ENCODE measurements at regions of chr15 and their contacts with region 1.

Region 1: DNA sequence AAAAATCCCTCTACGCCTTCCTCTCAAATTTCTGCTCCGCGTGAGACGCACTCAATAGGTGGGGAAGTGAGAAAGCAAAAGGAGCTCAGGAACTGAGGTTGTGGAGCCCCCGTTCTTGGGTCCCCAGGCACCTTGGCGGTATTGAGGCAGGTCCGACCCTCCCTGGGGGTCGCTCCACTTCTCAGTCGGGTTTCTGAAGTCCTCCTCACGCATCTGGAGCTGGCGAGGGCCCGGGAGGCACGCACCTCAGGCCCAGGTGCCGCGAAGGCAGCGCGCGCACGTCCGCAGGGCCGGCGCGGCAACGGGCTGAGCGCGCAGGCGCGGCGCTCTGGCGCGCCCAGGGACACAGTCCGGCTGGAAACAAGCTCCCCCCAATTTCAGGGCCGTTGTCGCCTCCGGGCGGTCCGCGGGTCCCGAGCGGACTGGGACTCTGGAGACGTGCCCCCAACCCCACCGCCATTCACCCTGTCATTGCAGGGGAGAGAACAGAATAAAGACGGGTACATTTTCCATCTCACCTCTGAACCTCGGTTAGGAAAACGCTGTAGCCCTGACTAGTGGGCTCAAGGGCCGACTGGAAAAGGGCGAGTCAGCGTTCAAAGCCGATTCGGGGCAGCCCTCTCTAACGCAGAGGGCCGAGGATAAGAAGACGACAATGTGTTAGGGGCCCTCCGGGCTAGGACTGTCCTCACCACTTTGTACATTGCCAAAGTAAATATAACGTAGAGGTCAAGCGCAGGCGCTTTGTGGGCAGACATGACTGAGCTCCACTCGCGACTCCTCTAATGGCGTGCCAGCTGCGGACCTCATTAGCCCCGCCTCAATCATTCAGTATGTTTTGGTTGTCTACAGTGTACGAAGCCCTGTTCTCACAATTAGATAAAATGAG is at the start of gene ZNF770:
- DNase-seq: peak; percentile 90
- H3K4me3 Mint-ChIP-seq: peak within 1 kb of the TSS; percentile 97
- H3K27ac Mint-ChIP-seq: peak within 1 kb of the TSS; percentile 100
- H3K4me1 Mint-ChIP-seq: peaks cover 36% of the 10 kb centered on the region
- H3K27me3 Mint-ChIP-seq: no peaks in the 10 kb centered on the region
- total RNA-seq, gene ZNF770: 36.6 to 38.5 TPM

Region 2: DNA sequence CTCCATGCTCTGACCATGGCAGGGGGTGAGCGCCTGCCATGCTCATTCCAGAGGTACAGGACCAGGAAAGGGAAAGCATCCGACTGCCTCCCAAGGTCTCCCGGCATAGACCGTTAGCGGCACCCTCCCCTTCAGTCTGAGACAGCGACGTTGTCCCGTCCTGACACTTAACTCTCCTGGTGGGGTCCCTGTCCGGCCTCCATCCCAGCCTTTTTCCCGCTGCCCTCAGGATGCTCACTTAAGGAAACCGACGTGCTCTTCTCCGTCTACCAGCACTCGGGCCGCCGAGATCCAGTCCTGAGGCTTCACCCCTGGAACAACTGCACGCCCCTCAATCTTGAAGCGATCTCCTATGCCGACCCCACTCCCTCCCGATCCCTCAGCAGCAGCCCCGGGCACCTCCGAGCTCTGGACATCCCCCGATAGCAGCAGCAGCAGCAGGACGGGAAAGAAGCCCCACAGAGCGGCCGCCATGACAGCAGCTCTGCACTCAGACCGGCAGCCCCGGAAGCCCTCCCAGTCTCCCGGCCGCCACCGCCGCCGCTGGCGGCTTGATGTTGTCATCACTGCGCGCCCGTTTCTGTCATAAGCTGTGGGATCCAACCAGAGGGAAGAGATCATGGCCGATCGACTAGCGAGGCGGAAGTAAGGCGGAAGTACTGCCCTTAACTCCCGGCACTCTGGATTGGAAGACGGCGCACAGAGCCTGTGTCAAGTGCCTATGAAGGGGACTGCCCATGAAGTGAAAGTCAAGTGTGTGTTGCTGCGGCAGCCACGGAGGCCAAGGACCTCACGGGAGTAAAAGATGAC is 886.7 kb before region 1 on chr15 and contains the starts of genes EMC7 and PGBD4:
- CTCF ChIA-PET with region 1: no interaction called
- POLR2A ChIA-PET with region 1: no interaction called
- intact Hi-C with region 1: loop called (anchors 1 kb)
- DNase-seq: peak; percentile 100
- H3K4me3 Mint-ChIP-seq: peak within 1 kb of the TSS; percentile 99
- H3K27ac Mint-ChIP-seq: peak within 1 kb of the TSS; percentile 96
- H3K4me1 Mint-ChIP-seq: peaks cover 36% of the 10 kb centered on the region
- H3K27me3 Mint-ChIP-seq: no peaks in the 10 kb centered on the region
- total RNA-seq, gene EMC7: 62.7 to 68.4 TPM
- total RNA-seq, gene PGBD4: 2.0 to 2.3 TPM

Region 3: DNA sequence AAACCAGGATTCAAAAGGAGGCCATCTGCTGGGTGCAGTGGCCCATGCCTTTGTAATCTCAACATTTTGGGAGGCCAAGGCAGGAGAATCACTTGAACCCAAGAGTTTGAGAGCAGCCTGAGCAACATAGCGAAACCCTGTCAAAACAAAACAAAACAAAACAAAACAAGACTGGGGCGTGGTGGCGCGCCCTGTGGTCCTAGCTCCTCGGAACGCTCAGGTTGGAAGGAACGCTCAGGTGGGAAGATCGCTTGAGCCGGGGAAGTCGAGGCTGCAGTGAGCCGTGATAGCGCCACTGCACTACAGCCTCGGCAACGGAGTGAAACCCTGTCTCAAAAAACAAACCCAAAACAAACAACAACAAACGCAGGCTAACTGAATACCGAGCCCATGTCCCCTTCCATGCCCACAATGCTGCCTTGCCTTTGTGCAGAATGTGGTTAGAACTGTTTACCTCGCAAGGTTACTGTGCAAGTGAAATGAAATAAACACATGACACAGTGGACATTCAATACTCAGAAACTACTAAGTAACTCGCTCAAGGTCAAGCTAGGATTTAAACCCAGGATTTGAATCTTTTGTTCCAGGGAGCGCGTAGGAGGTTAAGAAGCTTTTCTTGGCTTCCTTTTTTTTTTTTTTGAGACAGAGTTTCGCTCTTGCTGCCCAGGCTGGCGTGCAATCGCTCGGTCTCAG is 764.2 kb before region 1 on chr15:
- CTCF ChIA-PET with region 1: no interaction called
- POLR2A ChIA-PET with region 1: no interaction called
- intact Hi-C with region 1: loop called (anchors 2 kb)
- DNase-seq: no peak
- H3K4me3 Mint-ChIP-seq: peak overlapping the region; percentile 98
- H3K27ac Mint-ChIP-seq: peak overlapping the region; percentile 98
- H3K4me1 Mint-ChIP-seq: peaks cover 27% of the 10 kb centered on the region
- H3K27me3 Mint-ChIP-seq: peaks cover 2% of the 10 kb centered on the region

Region 4: GRCh38 chr15:34969340-34970097 is 18.7 kb before region 1 on chr15 and contains the start of gene AQR:
- CTCF ChIA-PET with region 1: interaction called, 68 read pairs
- POLR2A ChIA-PET with region 1: interaction called, 40 read pairs
- intact Hi-C with region 1: loop called (anchors 1 kb)
- DNase-seq: peak; percentile 96
- H3K4me3 Mint-ChIP-seq: peak within 1 kb of the TSS; percentile 100
- H3K27ac Mint-ChIP-seq: peak within 1 kb of the TSS; percentile 95
- H3K4me1 Mint-ChIP-seq: peaks cover 31% of the 10 kb centered on the region
- H3K27me3 Mint-ChIP-seq: no peaks in the 10 kb centered on the region
- total RNA-seq, gene AQR: 30.1 to 33.2 TPM

Region 5: DNA sequence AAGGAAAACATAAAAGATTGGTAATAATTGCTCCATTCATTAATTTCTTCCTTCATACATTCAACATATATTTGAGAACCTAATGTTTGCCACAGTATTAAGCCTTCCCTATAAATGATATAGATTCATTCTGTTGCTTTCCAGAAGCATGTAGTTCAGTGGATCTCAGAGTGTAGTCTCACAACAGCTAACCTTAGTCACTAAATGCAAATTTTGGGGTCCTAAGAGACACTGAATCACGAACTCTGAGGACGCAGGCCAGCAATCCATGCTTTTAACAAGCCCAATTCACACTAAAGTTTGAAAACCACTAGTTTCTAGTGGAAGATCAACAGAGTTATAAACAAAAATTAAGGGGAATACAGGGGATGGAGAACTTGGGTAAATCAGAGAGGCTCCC is 11.5 kb before region 1 on chr15:
- CTCF ChIA-PET with region 1: interaction called, 3 read pairs
- POLR2A ChIA-PET with region 1: interaction called, 40 read pairs
- intact Hi-C with region 1: no loop called
- DNase-seq: no peak
- H3K4me3 Mint-ChIP-seq: no peak overlapping the region
- H3K27ac Mint-ChIP-seq: no peak overlapping the region
- H3K4me1 Mint-ChIP-seq: peaks cover 4% of the 10 kb centered on the region
- H3K27me3 Mint-ChIP-seq: no peaks in the 10 kb centered on the region

Region 6: GRCh38 chr15:35000511-35000910 is 12.3 kb after region 1 on chr15:
- CTCF ChIA-PET with region 1: no interaction called
- POLR2A ChIA-PET with region 1: no interaction called
- intact Hi-C with region 1: no loop called
- DNase-seq: no peak
- H3K4me3 Mint-ChIP-seq: no peak overlapping the region
- H3K27ac Mint-ChIP-seq: no peak overlapping the region
- H3K4me1 Mint-ChIP-seq: no peaks in the 10 kb centered on the region
- H3K27me3 Mint-ChIP-seq: peaks cover 6% of the 10 kb centered on the region

Region 7: GRCh38 chr15:35545824-35546510 is 557.7 kb after region 1 on chr15 and contains the start of gene DPH6:
- CTCF ChIA-PET with region 1: no interaction called
- POLR2A ChIA-PET with region 1: no interaction called
- intact Hi-C with region 1: loop called (anchors 1 kb)
- DNase-seq: peak; percentile 85
- H3K4me3 Mint-ChIP-seq: peak within 1 kb of the TSS; percentile 94
- H3K27ac Mint-ChIP-seq: peak within 1 kb of the TSS; percentile 94
- H3K4me1 Mint-ChIP-seq: peaks cover 18% of the 10 kb centered on the region
- H3K27me3 Mint-ChIP-seq: no peaks in the 10 kb centered on the region
- total RNA-seq, gene DPH6: 14.3 to 15.9 TPM

Measured in activated CD4-positive, alpha-beta memory T cell treated with anti-CD3 and anti-CD28 coated beads for 36 hours (primary cell).